ENCODE measurements at regions of chr6 and their contacts with region 1.

Region 1: DNA sequence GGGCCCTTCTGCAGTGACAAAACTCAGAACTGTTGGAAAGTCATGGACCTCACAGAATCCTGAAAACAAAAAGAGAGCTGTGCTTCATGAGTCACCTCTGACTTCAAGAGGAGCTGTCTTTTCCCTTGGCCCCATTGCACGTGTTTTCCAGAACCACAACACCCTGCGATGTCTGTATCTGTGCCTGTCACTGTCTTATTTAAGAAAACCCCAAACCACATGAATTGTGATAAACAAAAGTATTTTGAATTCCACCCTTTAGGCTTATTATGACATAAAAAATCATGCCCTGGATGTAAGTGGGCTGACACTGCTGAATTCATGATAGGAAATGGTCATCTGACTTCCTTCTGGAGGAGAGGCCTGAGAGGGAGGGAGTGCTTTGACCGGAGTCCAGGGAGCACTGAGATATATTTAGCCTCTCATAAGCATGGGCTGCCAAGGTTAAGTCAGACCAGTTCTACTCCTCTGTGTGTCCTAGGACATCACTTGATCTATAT is 96.4 kb upstream of the DUSP22 start:
- DNase-seq: peak; percentile 78

Region 2: DNA sequence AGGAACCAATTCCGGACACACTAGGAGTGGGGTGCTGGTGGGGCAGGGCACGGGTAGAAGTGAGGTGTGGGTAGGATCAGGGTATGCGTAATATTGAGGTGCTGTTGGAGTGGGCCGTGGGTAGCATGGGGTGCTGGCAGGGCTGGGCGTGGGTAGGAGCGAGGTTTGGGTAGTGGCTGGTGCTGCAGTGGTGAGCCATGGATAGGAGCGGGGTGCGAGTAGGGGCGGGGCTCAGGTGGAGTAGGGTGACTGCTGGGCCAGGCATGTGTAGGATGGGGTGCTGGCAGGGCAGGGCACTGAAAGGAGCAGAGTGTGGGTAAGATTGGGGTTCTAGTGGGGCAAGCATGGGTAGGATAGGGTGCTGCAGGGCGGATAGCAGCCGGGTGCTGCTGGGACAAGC is 17.8 kb before region 1 on chr6:
- intact Hi-C with region 1: no loop called
- DNase-seq: no peak

Region 3: DNA sequence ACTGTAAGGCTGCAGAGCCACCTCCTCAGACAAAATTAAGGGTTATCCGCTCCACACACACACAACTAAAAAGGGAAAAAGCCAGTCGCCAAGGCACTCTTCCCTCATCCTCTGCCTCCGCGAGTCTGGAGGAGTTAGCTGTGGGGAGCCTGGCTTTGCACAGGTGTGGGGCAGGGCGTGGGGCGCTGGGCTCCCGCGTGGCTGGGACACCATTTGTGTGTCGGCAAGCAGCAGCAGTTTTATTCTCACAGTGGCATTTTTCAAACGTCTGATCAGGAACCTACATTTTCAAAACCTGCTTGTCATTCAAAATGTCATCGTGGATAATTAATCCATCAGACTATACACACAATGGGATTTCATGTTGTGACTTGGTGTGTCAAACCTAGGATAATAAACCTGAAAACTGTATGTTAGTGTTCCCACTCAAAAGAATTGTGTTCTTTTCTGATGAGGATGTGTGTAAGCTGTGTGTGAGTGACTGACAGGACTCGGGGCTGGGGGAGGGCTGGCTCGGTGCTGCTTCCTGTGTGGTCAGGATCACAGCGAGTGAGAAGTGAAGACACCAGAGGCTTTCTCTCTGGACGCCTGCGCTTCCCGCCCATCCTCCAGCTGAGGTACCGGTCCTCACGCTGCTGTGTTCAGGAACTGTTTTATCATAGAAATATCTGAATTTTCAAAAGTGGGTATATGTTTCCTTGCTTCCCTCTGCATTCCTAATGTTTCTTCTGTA is 278.7 kb after region 1 on chr6:
- intact Hi-C with region 1: loop called in 1 of 2 experiments (anchors 5 kb)
- DNase-seq: no peak

Region 4: GRCh38 chr6:2179959-2180358 is 1984.0 kb after region 1 on chr6:
- intact Hi-C with region 1: no loop called
- DNase-seq: no peak

Measured in posterior vena cava (tissue), 2 donors.